Activated naive CD8-positive, alpha-beta T cell treated with anti-CD3 and anti-CD28 coated beads, Interleukin-2, amount 10 ng/mL, durations not matched to agents 7 days and 5 days (primary cell): ENCODE measurements at regions of chr15 and their contacts with region 1.

Region 1: GRCh38 chr15:90677807-90678790 is 39.0 kb upstream of the BLM start:
- DNase-seq: peak; percentile 26
- ATAC-seq: peak; percentile 90
- H3K4me3 Mint-ChIP-seq: peak overlapping the region; percentile 79
- H3K27ac Mint-ChIP-seq: peak overlapping the region; percentile 95
- H3K4me1 Mint-ChIP-seq: peaks cover 35% of the 10 kb centered on the region
- H3K27me3 Mint-ChIP-seq: no peaks in the 10 kb centered on the region

Region 2: DNA sequence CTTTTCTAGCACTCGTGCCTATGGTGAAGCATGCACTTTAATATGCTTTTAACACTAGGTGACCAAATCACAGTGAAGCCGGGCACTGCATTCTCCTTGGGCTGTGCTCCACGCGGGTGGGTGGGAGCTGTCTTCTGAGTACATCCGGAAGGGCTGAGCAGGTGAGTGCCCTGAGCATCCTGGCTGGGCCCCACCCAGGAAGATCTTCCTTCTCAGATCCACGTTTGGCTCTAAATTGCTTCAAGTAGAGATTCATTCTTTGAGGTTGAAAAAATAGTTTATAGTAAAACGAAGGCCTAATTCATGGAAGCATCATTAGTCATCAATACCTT is 34.8 kb before region 1 on chr15:
- POLR2A ChIA-PET with region 1: no interaction called
- DNase-seq: no peak
- ATAC-seq: no peak
- H3K4me3 Mint-ChIP-seq: no peak overlapping the region
- H3K27ac Mint-ChIP-seq: peak overlapping the region; percentile 9
- H3K4me1 Mint-ChIP-seq: peaks cover 8% of the 10 kb centered on the region
- H3K27me3 Mint-ChIP-seq: no peaks in the 10 kb centered on the region

Region 3: DNA sequence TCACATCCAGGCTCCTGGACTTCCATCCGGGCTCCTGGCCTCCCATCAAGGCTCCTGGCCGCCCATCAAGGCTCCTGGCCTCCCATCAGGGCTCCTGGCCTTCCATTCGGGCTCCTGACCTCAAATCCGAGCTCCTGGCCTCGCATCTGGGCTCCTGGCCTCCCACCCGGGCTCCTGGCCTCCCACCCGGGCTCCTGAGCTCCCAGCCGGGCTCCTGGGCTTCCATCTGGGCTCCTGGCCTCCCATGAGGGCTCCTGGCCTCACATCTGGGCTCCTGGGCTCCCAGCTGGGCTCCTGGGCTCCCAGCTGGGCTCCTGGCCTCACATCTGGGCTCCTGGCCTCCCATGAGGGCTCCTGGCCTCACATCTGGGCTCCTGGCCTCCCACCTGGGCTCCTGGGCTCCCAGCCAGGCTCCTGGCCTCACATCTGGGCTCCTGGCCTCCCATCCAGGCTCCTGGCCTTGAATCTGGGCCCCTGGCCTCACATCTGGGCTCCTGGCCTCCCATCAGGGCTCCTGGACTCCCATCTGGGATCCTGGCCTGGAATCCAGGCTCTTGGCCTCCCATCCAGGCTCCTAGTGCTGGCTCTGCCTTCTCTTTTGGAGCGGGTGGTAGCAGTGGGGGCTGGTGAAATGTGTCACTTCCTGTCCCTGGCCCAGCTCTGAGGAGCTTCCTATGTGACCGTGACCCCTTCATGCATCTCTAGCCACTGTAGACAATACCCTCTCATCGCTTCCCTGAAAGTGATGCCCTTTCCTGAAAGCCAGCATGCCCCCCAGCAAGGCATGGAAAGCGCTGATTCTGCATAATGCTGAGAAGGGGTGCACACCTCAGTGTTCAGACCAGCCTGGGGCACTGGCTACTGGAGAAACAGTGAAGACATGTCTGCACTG is 23.6 kb before region 1 on chr15:
- POLR2A ChIA-PET with region 1: interaction called, 14 read pairs
- DNase-seq: peak; percentile 54
- ATAC-seq: peak; percentile 73
- H3K4me3 Mint-ChIP-seq: peak overlapping the region; percentile 39
- H3K27ac Mint-ChIP-seq: peak overlapping the region; percentile 85
- H3K4me1 Mint-ChIP-seq: peaks cover 56% of the 10 kb centered on the region
- H3K27me3 Mint-ChIP-seq: peaks cover 3% of the 10 kb centered on the region

Region 4: GRCh38 chr15:90660195-90660998 is 17.7 kb before region 1 on chr15:
- POLR2A ChIA-PET with region 1: interaction called, 49 read pairs
- DNase-seq: peak; percentile 68
- ATAC-seq: peak; percentile 79
- H3K4me3 Mint-ChIP-seq: peak overlapping the region; percentile 79
- H3K27ac Mint-ChIP-seq: peak overlapping the region; percentile 87
- H3K4me1 Mint-ChIP-seq: peaks cover 65% of the 10 kb centered on the region
- H3K27me3 Mint-ChIP-seq: peaks cover 3% of the 10 kb centered on the region

Region 5: GRCh38 chr15:90780916-90781315 is 102.8 kb after region 1 on chr15:
- POLR2A ChIA-PET with region 1: no interaction called
- DNase-seq: no peak
- ATAC-seq: peak; percentile 96
- H3K4me3 Mint-ChIP-seq: peak overlapping the region; percentile 64
- H3K27ac Mint-ChIP-seq: peak overlapping the region; percentile 87
- H3K4me1 Mint-ChIP-seq: peaks cover 26% of the 10 kb centered on the region
- H3K27me3 Mint-ChIP-seq: no peaks in the 10 kb centered on the region